HEK293 (cell line): ENCODE measurements at regions of chr6 and their contacts with region 1.

Region 1: GRCh38 chr6:33248925-33249731 is 22.5 kb downstream of the VPS52 start:
- H3K4me3 ChIP-seq: peak overlapping the region; percentile 62
- H3K27ac ChIP-seq: peak overlapping the region; percentile 88
- H3K4me1 ChIP-seq: peaks cover 12% of the 10 kb centered on the region
- CTCF ChIP-seq: 0 out of 2 replicates have a peak, but pooled peaks have one; percentile 35

Region 2: DNA sequence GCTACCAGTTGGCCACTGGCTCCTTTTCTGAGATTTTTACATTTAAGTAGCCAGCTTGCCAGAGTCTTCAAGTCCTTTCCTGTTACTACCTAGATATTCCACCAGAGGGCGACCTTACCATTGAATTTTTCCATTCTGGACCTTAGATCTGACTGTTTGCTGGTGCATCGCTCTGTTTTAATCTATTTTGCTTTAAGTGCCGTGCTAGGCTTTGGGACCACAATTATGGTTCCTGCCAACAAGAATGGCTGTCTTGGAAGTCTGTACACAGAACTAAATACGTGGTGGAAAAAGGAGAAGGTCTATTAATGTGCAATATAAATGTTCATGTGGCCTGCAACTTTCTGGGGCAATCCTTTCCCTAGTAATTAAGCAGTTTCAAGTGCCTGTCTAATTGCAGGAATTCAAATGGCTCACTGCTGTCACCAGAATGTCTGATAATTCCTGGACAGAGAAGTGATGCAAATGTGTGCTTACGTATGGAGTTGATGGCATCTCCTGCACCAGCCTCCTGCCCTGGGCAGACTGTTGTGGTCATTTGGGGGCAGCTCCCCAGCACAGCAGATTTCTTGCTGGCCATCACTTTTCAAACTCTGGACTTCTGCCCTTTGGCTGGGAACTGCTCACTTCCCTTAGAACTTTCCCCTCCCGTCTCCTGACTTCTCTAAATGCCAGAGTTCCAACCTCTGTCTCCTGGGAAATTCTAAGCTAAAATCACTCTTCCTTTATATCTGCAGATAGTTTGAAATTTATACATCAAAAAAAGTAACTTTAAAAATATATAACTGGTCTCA is 234.1 kb before region 1 on chr6:
- CTCF ChIA-PET with region 1: interaction called, 59 read pairs
- POLR2A ChIA-PET with region 1: no interaction called
- H3K4me3 ChIP-seq: no peak overlapping the region
- H3K27ac ChIP-seq: no peak overlapping the region
- H3K4me1 ChIP-seq: no peaks in the 10 kb centered on the region
- CTCF ChIP-seq: peak; percentile 57

Region 3: DNA sequence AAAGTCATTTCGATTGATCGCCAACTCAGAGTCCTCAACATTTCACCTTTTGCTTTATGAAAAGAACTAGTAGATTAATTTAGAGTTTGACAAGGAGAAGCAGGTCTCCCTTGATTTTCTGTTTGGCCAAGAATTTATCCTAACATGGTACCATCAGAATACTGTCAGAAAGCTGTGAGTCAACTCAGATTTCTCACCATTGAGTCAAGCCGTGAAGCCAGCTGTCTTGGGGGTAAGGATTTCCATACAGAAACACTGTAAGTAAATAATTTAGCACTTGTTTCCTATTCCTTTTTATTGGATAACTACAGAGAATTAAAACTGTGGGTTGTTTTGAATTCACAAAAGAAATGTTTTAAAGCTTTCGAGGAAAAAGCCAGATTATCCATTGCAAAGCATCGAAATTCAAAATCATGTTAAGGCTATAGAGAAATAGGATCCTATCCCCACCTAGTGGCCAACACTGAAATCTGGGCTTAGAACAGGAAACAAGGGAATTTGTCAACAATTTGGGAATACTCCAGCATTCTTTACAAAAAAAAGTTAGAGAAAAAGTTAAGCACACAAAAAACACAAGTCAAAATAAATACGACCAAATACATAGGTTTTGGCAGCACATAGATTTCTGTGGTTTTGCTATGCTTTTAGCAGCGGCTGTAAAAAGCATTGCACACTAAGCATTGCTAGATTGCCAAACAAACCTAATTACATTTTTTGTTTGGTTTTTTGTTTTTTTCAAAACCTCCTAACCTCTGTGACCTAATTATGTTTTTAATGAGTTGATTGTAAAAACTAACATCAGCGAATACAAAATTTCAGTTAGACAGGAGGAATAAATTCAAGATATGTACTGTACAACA is 101.1 kb before region 1 on chr6:
- CTCF ChIA-PET with region 1: interaction called, 21 read pairs
- POLR2A ChIA-PET with region 1: interaction called, 4 read pairs
- H3K4me3 ChIP-seq: no peak overlapping the region
- H3K27ac ChIP-seq: no peak overlapping the region
- H3K4me1 ChIP-seq: no peaks in the 10 kb centered on the region
- CTCF ChIP-seq: 0 out of 2 replicates have a peak, but pooled peaks have one; percentile 30

Region 4: GRCh38 chr6:33200219-33201146 is 48.6 kb before region 1 on chr6 and contains the starts of genes RXRB and SLC39A7:
- CTCF ChIA-PET with region 1: interaction called, 19 read pairs
- POLR2A ChIA-PET with region 1: interaction called, 30 read pairs
- H3K4me3 ChIP-seq: peak within 1 kb of the TSS; percentile 75
- H3K27ac ChIP-seq: peak within 1 kb of the TSS; percentile 98
- H3K4me1 ChIP-seq: peaks cover 23% of the 10 kb centered on the region
- CTCF ChIP-seq: no peak

Region 5: GRCh38 chr6:33235221-33235634 is 13.9 kb before region 1 on chr6:
- CTCF ChIA-PET with region 1: interaction called, 22 read pairs
- POLR2A ChIA-PET with region 1: interaction called, 3 read pairs
- H3K4me3 ChIP-seq: no peak overlapping the region
- H3K27ac ChIP-seq: peak overlapping the region; percentile 9; the same call in 1 of the 2 replicates
- H3K4me1 ChIP-seq: peaks cover 6% of the 10 kb centered on the region
- CTCF ChIP-seq: no peak

Region 6: DNA sequence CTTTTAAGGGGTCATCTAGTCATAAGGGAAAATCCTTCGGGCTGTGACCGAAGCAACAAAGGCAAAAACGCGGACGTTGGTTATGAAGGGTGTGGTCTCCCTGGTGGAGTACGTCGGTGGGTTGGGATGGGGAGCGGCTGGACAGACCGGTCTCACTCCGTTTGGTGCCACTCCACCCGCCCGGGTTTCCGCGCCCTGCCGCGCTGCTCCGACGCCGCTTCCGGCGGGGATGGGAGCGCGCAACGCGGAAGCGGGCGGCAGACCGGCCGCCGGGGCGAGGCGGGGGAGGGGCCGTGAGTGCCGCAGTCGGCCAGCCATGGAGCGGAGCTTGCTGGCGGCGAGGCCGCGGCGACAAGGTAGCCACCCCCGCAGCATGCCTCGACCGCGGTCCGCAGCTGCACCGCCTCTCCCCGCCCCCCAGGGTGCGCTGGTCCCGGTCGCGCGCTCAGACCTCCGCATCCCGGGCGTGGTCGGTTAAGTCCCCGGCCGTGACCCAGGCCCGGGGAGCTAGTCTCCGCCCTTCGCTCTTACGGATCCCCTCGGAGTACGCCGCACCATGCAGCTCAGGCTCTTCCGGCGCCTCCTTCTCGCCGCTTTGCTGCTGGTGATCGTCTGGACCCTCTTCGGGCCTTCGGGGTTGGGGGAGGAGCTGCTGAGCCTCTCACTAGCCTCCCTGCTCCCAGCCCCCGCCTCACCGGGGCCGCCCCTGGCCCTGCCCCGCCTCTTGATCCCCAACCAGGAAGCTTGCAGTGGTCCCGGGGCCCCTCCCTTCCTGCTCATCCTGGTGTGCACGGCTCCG is 27.9 kb after region 1 on chr6 and contains the start of gene B3GALT4:
- CTCF ChIA-PET with region 1: interaction called, 8 read pairs
- POLR2A ChIA-PET with region 1: interaction called, 65 read pairs
- H3K4me3 ChIP-seq: peak within 1 kb of the TSS; percentile 56
- H3K27ac ChIP-seq: peak within 1 kb of the TSS; percentile 79
- H3K4me1 ChIP-seq: peaks cover 31% of the 10 kb centered on the region
- CTCF ChIP-seq: peak; percentile 97

Region 7: DNA sequence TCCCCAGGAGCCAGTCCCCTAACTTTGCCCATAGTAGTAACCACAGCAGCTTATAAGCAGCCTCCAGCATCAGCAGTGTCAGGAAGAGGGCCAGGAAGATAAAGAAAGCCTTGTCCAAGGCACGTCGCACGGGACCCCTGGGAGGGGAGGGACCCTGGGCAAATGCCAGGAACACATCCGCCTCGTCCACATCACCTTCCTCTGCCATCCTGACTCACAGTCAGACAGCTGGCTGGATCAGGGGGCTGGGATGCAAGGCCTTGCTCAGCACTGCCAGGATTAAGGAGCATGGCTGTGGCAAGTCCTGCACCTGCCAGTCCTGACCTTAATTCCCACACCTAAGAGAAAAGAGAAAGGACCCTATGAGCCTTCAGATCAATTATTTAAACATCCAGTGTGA is 79.9 kb after region 1 on chr6:
- CTCF ChIA-PET with region 1: no interaction called
- POLR2A ChIA-PET with region 1: no interaction called
- H3K4me3 ChIP-seq: no peak overlapping the region
- H3K27ac ChIP-seq: no peak overlapping the region
- H3K4me1 ChIP-seq: no peaks in the 10 kb centered on the region
- CTCF ChIP-seq: no peak

Region 8: DNA sequence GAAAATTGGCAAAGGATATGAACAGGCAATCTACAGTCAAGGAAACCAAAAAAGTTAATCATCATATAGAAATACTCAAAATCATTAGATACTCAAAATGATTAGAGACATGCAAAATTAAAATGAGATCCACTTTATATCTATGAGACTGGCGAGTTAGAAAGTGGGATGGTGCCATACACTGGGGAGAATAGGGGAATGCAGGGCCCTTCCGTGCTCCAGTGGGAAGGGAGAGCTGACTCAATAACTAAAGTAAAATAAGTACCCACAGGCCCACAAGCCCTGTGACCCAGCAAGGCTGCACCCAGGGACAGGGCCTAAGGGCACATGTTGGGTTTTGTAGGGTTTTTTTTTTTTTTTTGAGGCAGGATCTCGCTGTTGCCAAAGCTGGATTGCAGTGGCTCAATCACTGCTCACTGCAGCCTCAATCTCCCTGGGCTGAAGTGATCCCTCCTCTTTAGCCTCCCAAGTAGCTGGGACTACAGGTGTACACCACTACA is 286.0 kb after region 1 on chr6:
- CTCF ChIA-PET with region 1: no interaction called
- POLR2A ChIA-PET with region 1: no interaction called
- H3K4me3 ChIP-seq: no peak overlapping the region
- H3K27ac ChIP-seq: no peak overlapping the region
- H3K4me1 ChIP-seq: no peaks in the 10 kb centered on the region
- CTCF ChIP-seq: no peak